ENCODE measurements at regions of chr4 and their contacts with region 1.

Region 1: DNA sequence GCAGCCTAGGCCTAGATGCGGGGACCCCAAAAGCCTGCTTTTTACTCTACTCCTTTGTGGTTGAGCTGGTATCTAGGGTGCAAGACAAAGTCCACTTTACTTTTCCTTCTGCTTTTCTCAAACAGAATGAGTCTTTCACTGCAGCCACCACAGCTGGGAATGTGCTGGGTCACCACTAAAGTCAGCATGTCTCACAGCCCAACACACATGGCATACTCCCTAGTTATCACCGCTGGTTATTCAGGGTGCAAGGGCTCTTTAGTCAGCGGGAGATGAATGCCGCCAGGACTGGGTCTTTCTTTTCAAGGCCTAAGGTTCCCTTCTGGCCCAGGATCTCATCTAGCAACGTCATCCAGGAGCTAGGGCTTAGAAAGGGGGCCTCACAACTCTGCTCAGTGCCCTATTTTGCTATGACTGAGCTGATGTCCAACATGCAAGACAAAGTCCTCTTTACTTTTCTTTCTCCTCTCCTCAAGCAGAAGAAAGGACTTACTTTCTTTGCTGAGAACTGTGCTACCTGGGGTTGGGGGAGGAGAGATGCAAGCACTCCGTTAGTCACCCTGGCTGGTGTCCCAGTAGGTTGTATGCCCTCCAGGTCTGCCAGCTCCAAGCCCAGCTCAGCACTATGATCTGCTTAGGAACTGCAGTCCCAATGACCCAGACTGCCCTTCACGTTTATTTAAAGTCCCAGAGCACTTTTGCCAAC is 22.9 kb upstream of the STPG2 start:
- DNase-seq: peak; percentile 64
- ATAC-seq: peak; percentile 97

Region 2: GRCh38 chr4:98199209-98199608 is 33.0 kb after region 1 on chr4:
- intact Hi-C with region 1: loop called (anchors 1 kb)
- DNase-seq: no peak
- ATAC-seq: peak; percentile 86

Region 3: DNA sequence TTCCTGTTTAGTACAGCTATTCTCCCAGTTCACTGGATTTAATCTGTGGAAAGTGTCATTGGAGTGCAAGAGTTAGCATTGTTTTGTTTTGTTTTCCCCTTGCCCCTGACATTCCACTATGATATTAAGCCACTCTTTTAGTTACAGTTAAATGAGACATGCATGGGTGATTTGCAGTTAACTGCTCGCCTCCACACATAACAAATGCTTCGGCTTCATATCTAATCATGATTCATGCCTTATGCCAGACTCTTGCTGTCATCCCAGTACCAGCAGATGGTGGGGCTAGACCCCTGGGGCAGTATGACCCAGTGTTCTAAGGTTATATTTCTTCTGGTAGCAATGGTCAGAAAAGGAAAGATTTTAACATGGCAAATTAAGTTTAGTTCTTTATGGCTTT is 175.1 kb after region 1 on chr4:
- intact Hi-C with region 1: no loop called
- DNase-seq: no peak
- ATAC-seq: no peak